ENCODE measurements at regions of chr1 and their contacts with region 1.

Region 1: GRCh38 chr1:61839679-61840078 is 97.4 kb downstream of the PATJ start:
- DNase-seq: no peak
- H3K4me3 ChIP-seq: no peak overlapping the region
- H3K27ac ChIP-seq: peak overlapping the region in 1 of 4 donors; percentile 8
- H3K4me1 ChIP-seq: peaks cover 0 to 57% (median 43%) of the 10 kb centered on the region in 4 donors
- H3K27me3 ChIP-seq: no peaks in the 10 kb centered on the region
- CTCF ChIP-seq: no peak
- EP300 ChIP-seq: no peak
- POLR2A ChIP-seq: no peak

Region 2: DNA sequence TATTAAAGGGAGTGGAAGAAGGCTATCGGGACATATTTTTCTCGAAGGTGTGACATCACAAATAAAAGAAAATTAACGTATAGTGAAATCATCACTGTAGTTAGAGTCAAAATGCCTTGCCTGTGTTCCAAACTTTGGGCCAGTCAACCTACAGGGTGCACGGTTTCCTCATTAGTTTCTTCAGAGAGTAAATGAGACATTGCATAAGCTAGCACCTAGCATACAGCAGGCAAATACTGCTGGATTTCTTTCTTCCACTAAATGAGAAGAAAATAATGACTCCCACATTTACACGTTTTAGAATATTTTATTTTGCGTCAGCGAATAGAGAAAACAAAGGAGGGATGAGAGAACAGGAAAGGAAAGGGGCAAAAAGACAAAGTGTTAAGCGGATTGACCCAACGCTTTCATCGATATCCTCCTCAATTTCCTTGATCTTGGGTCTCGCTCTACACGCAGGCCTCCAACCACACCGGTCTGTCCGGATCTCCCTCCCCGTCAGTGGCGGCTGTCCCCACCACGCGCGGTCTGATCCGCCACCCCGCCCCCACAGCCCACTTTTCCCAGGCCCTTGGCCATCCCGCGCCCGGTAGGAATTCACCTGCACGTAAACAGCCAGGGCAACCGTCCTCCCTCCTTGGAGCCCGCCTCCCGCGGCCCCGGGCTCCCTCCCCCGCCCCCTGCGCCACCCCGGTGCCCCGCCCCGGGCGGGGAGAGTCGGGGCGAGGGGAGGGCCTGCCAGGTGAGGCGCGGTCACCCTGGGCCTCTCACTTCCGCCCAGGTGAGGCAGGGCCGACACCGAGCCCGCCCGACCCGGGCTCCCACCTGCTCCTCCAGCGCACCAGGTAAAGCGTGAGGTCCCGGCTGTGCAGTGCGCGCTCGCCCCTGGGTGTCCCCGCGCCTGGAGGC is 97.7 kb before region 1 on chr1 and contains the start of gene PATJ:
- intact Hi-C with region 1: loop called (anchors 10 kb)
- DNase-seq: no peak
- H3K4me3 ChIP-seq: peak within 1 kb of the TSS; percentile 88 to 99 (median 93)
- H3K27ac ChIP-seq: peak within 1 kb of the TSS; percentile 95 to 98 (median 98)
- H3K4me1 ChIP-seq: peaks cover 4 to 31% (median 27%) of the 10 kb centered on the region in 4 donors
- H3K27me3 ChIP-seq: no peaks in the 10 kb centered on the region
- CTCF ChIP-seq: no peak
- EP300 ChIP-seq: no peak
- POLR2A ChIP-seq: no peak
- total RNA-seq, gene PATJ: 25.7 to 37.4 (median 31.8) TPM

Region 3: GRCh38 chr1:61904354-61904753 is 64.7 kb after region 1 on chr1:
- intact Hi-C with region 1: no loop called
- DNase-seq: no peak
- H3K4me3 ChIP-seq: no peak overlapping the region
- H3K27ac ChIP-seq: no peak overlapping the region
- H3K4me1 ChIP-seq: peaks cover 0 to 22% (median 15%) of the 10 kb centered on the region in 4 donors
- H3K27me3 ChIP-seq: no peaks in the 10 kb centered on the region
- CTCF ChIP-seq: no peak
- EP300 ChIP-seq: no peak
- POLR2A ChIP-seq: no peak